ENCODE measurements at regions of chr22 and their contacts with region 1.

Region 1: GRCh38 chr22:28759861-28760560 is 12.5 kb upstream of the CCDC117 start:
- DNase-seq: no peak
- H3K4me3 ChIP-seq: no peak overlapping the region
- H3K27ac ChIP-seq: no peak overlapping the region
- H3K27me3 ChIP-seq: no peaks in the 10 kb centered on the region
- CTCF ChIP-seq: no peak

Region 2: DNA sequence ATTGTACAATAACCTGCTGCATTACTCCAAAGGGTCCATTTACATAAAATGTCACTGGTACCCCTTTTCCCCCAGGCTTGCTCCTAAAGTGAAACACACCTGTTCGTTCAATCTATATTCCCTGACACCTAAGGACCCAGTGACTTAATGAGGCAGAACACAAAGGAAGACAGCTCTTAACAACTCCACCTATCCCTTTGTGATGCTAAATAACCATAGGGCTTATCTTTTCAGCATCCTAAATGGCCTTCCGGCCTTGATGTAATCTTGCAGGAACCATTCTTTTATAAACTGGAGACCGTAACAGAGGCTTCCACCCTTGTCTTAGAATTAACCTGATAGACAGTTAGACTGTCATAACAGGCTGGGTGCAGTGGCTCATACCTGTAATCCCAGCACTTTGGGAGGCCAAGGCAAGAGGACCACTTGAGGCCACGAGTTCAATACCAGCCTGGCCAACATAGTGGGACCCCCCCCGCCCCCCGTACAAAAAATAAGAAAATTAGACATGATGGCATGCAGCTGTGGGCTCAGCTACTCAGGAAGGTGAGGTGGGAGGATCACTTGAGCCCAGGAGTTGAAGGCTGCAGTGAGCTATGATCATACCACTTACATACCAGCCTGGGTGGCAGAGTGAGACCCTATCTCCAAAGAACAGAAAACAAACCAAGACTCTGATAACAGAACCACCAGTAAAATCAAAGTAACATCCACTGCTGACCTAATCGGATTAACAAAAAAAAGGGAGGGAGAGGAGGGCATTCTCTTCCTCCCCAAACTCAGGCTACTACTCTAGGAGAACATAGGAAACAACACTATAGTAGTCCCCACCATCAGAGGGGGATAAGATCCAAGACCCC is 23.5 kb before region 1 on chr22:
- CTCF ChIA-PET with region 1: no interaction called
- POLR2A ChIA-PET with region 1: no interaction called
- DNase-seq: no peak
- H3K4me3 ChIP-seq: no peak overlapping the region
- H3K27ac ChIP-seq: no peak overlapping the region
- H3K27me3 ChIP-seq: no peaks in the 10 kb centered on the region
- CTCF ChIP-seq: no peak

Region 3: DNA sequence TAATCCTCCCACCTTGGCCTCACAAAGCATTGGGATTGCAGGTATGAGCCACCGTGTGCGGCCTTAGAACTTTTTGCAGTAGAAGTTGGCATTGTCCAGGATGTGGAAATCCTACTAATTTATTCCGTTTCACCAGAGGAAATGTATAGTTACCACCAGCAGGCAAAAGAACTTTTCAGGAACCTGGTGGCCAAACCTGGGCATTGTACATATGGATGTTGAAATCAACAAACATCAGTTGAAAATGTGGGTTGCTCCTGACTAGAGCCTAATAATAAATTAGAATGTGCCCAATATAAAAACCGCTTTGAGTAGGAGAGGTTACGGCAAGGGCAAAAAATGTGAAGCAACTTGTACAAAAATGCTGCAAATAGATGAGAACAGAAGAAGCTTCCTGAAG is 81.1 kb after region 1 on chr22:
- CTCF ChIA-PET with region 1: no interaction called
- POLR2A ChIA-PET with region 1: no interaction called
- DNase-seq: no peak
- H3K4me3 ChIP-seq: no peak overlapping the region
- H3K27ac ChIP-seq: no peak overlapping the region
- H3K27me3 ChIP-seq: no peaks in the 10 kb centered on the region
- CTCF ChIP-seq: peak; percentile 14; the same call in 1 of the 2 replicates

Region 4: GRCh38 chr22:28917747-28918549 is 157.9 kb after region 1 on chr22:
- CTCF ChIA-PET with region 1: no interaction called
- POLR2A ChIA-PET with region 1: interaction called, 12 read pairs
- DNase-seq: no peak
- H3K4me3 ChIP-seq: no peak overlapping the region
- H3K27ac ChIP-seq: no peak overlapping the region
- H3K27me3 ChIP-seq: no peaks in the 10 kb centered on the region
- CTCF ChIP-seq: no peak